Heart left ventricle (tissue), 16 donors: ENCODE measurements at regions of chr1 and their contacts with region 1.

Region 1: GRCh38 chr1:234621657-234622335 is 11.8 kb upstream of the IRF2BP2 start:
- DNase-seq: peak in 1 of 5 donors; percentile 40
- ATAC-seq: peak in 3 of 4 donors; percentile 27 to 67 (median 47)
- H3K4me3 ChIP-seq: no peak overlapping the region
- H3K27ac ChIP-seq: peak overlapping the region in 3 of 12 donors; percentile 27 to 35 (median 32)
- H3K4me1 ChIP-seq: peaks cover 0 to 51% (median 14%) of the 10 kb centered on the region in 12 donors
- H3K27me3 ChIP-seq: no peaks in the 10 kb centered on the region
- CTCF ChIP-seq: no peak
- POLR2A ChIP-seq: no peak

Region 2: DNA sequence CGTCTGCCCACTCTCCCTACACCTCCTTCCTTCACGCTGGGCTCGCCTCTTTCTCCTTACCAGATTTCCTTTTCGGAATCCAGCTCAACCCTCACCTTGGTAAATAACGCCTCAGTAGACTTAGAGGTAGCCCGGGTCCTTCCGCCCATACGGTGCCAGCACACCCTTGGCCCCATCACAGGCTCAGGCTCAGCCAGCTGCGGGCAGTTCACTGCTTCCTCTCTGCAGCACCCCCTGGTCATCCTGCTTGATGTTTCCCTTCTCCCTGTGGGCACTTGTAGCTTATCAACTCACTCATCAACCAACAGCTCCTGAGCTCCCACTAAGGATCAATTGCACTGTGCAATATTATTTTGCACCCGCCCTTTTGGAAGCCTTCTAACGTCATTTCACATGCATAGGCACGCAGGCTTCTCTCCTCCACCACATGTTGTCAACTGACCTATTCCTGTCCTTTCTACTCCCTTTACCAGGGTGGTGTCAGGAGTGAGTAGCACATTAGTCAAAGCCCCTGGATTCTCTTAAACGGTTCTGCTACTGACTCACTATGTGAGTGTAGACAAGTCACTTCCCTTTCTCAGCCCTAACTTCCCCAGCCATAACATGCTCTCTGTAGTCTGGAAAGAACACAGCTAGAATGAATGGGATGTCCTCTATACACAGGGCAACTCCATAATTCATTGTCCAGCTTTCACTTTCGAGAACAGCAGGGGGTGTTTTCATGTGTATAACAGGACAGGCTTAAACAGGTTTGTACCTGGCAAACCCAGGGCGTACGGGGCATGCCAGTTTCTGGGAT is 35.3 kb after region 1 on chr1:
- intact Hi-C with region 1: loop called in 2 of 10 experiments (anchors 5 kb)
- DNase-seq: no peak
- ATAC-seq: peak; percentile 65 to 86 (median 70)
- H3K4me3 ChIP-seq: no peak overlapping the region
- H3K27ac ChIP-seq: peak overlapping the region in 1 of 12 donors; percentile 85
- H3K4me1 ChIP-seq: peaks cover 0 to 33% (median 0%) of the 10 kb centered on the region in 12 donors
- H3K27me3 ChIP-seq: no peaks in the 10 kb centered on the region
- CTCF ChIP-seq: peak in 2 of 12 donors; percentile 4 to 9
- POLR2A ChIP-seq: no peak

Region 3: GRCh38 chr1:234670967-234671626 is 49.3 kb after region 1 on chr1:
- intact Hi-C with region 1: loop called in 3 of 10 experiments (anchors 5 to 10 kb)
- DNase-seq: no peak
- ATAC-seq: no peak
- H3K4me3 ChIP-seq: no peak overlapping the region
- H3K27ac ChIP-seq: no peak overlapping the region
- H3K4me1 ChIP-seq: peaks cover 0 to 18% (median 3%) of the 10 kb centered on the region in 12 donors
- H3K27me3 ChIP-seq: no peaks in the 10 kb centered on the region
- CTCF ChIP-seq: no peak
- POLR2A ChIP-seq: no peak

Region 4: GRCh38 chr1:234676103-234676594 is 54.4 kb after region 1 on chr1:
- intact Hi-C with region 1: loop called in 3 of 10 experiments (anchors 5 to 10 kb)
- DNase-seq: peak; percentile 86 to 92 (median 89)
- ATAC-seq: peak; percentile 94 to 99 (median 98)
- H3K4me3 ChIP-seq: peak overlapping the region in 11 of 12 donors; percentile 13 to 61 (median 47)
- H3K27ac ChIP-seq: peak overlapping the region; percentile 26 to 78 (median 66)
- H3K4me1 ChIP-seq: peaks cover 0 to 15% (median 5%) of the 10 kb centered on the region in 12 donors
- H3K27me3 ChIP-seq: no peaks in the 10 kb centered on the region
- CTCF ChIP-seq: no peak
- POLR2A ChIP-seq: peak in 1 of 2 donors; percentile 24

Region 5: DNA sequence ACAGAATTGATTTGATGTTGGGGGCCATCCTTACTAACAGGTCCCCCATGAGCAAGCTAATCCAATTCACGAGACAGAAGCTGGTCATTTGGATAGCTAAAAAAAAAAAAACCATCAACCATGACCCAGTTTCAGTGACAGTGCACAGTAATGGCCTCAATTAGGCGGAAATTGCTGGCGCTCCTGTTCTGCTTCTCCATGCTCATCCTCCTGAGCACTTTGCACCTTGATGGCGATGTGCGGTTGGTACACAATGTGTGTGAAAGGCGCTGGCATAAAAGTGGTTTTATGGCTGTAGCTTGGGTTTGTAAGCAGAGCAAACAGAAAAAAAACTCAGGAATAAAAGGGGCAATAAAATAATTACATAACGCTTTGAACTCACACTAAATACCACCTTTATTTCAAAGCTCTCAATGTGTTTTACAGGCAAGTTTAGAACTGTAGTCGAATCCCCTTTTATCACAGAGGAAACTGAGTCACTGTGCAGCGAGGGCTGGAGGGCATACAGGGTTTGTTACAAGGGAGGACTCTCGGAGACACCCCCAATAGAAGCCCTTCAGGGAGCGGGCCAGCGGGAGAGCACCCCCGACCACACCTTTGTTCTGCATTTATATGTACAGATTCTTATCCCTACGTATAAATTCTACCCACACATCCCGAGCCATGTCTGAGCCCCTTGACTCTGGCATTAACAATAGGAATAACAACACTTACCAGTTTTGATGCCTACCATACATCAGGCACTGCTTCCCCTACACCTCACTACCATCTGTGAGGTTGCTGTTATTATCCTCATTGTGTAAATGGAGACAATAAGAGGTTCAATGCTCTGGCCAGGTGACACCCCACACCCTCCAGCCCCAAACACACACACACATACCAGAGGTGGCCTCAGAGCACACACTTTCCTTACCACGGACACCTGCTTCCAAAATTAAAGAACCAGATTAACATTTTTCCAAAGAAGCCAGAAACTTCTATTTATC is 201.7 kb after region 1 on chr1:
- intact Hi-C with region 1: loop called in 1 of 10 experiments (anchors 10 kb)
- DNase-seq: no peak
- ATAC-seq: no peak
- H3K4me3 ChIP-seq: no peak overlapping the region
- H3K27ac ChIP-seq: no peak overlapping the region
- H3K4me1 ChIP-seq: no peaks in the 10 kb centered on the region
- H3K27me3 ChIP-seq: no peaks in the 10 kb centered on the region
- CTCF ChIP-seq: no peak
- POLR2A ChIP-seq: no peak